ENCODE measurements at regions of chr1 and their contacts with region 1.

Region 1: DNA sequence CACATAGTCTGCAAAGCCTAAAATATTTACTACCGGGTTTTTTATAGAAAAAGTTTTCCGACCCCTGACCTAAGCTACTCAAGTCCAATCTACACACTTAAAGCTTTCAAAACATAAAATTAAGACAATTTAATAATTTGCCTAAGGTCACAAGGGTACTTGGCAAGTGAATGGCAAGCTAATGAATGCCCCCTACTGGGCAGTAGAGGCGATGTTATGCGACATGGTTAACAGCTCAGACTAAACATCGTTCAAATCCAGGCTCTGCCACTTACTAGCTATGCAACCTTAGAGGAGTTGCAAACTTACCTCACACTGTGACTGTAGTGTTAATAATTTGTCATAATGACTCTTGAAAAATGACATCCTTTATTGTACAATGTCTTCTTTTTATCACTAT is 317.2 kb upstream of the NFIA start:
- DNase-seq: no peak
- ATAC-seq: peak; percentile 71
- H3K4me3 ChIP-seq: no peak overlapping the region
- H3K27ac ChIP-seq: no peak overlapping the region
- H3K4me1 ChIP-seq: no peaks in the 10 kb centered on the region
- H3K27me3 ChIP-seq: no peaks in the 10 kb centered on the region
- CTCF ChIP-seq: peak; percentile 42 to 56 (median 47); a peak in 5 of 6 replicates
- EP300 ChIP-seq: no peak
- POLR2A ChIP-seq: no peak
- RAD21 ChIP-seq: peak; percentile 58

Region 2: GRCh38 chr1:59971464-59971911 is 793.7 kb before region 1 on chr1:
- CTCF ChIA-PET with region 1: interaction called, 9 read pairs
- POLR2A ChIA-PET with region 1: no interaction called
- RAD21 ChIA-PET with region 1: interaction called, 8 read pairs
- SMC1A ChIA-PET with region 1: interaction called, 3 read pairs
- in situ Hi-C with region 1: no loop called
- intact Hi-C with region 1: loop called (anchors 10 kb)
- DNase-seq: no peak
- ATAC-seq: peak; percentile 86
- H3K4me3 ChIP-seq: no peak overlapping the region
- H3K27ac ChIP-seq: no peak overlapping the region
- H3K4me1 ChIP-seq: no peaks in the 10 kb centered on the region
- H3K27me3 ChIP-seq: no peaks in the 10 kb centered on the region
- CTCF ChIP-seq: peak; percentile 87 to 90 (median 90)
- EP300 ChIP-seq: no peak
- POLR2A ChIP-seq: no peak
- RAD21 ChIP-seq: peak; percentile 68

Region 3: DNA sequence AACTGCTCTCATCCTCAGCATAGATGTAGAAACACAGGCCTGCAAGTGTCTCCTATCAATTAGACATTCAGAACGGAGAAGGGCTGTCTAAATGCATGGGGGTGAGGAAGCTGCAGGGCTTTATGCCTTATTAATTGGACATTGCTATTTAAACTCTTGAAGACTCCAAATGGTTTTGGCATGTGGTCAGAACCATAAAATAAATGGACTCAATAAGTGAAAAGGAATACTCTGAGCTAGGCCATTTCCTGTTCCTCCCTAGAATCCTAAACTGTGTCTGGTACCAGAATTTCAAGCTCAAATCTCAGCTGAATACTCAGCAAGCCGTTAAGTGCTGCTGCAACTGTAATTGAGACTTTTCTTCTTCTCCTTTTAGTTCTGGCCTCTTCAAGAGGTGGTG is 611.2 kb before region 1 on chr1:
- CTCF ChIA-PET with region 1: interaction called, 3 read pairs
- POLR2A ChIA-PET with region 1: no interaction called
- RAD21 ChIA-PET with region 1: no interaction called
- SMC1A ChIA-PET with region 1: no interaction called
- in situ Hi-C with region 1: no loop called
- intact Hi-C with region 1: loop called (anchors 5 kb)
- DNase-seq: no peak
- ATAC-seq: no peak
- H3K4me3 ChIP-seq: no peak overlapping the region
- H3K27ac ChIP-seq: no peak overlapping the region
- H3K4me1 ChIP-seq: no peaks in the 10 kb centered on the region
- H3K27me3 ChIP-seq: no peaks in the 10 kb centered on the region; a peak in 1 of 4 replicates
- CTCF ChIP-seq: no peak
- EP300 ChIP-seq: no peak
- POLR2A ChIP-seq: no peak
- RAD21 ChIP-seq: no peak

Region 4: GRCh38 chr1:60281360-60281932 is 483.8 kb before region 1 on chr1:
- CTCF ChIA-PET with region 1: interaction called, 16 read pairs
- POLR2A ChIA-PET with region 1: no interaction called
- RAD21 ChIA-PET with region 1: interaction called, 8 read pairs
- SMC1A ChIA-PET with region 1: interaction called, 10 read pairs
- in situ Hi-C with region 1: loop called (anchors 10 kb)
- intact Hi-C with region 1: no loop called
- DNase-seq: peak; percentile 1
- ATAC-seq: peak; percentile 91
- H3K4me3 ChIP-seq: no peak overlapping the region
- H3K27ac ChIP-seq: no peak overlapping the region
- H3K4me1 ChIP-seq: no peaks in the 10 kb centered on the region
- H3K27me3 ChIP-seq: no peaks in the 10 kb centered on the region
- CTCF ChIP-seq: peak; percentile 70 to 86 (median 71)
- EP300 ChIP-seq: no peak
- POLR2A ChIP-seq: no peak
- RAD21 ChIP-seq: peak; percentile 97